Endothelial cell of umbilical vein (primary cell): ENCODE measurements at regions of chr7 and their contacts with region 1.

Region 1: GRCh38 chr7:142782922-142783900 is 12.4 kb downstream of the PRSS2 start:
- DNase-seq: peak; percentile 88
- H3K4me3 ChIP-seq: peak overlapping the region; percentile 32 to 55 (median 49)
- H3K27ac ChIP-seq: no peak overlapping the region
- H3K4me1 ChIP-seq: peaks cover 3% of the 10 kb centered on the region
- H3K27me3 ChIP-seq: no peaks in the 10 kb centered on the region
- CTCF ChIP-seq: peak; percentile 92 to 98
- POLR2A ChIP-seq: no peak

Region 2: GRCh38 chr7:142535123-142535779 is 248.0 kb before region 1 on chr7:
- CTCF ChIA-PET with region 1: interaction called, 167 read pairs
- POLR2A ChIA-PET with region 1: interaction called, 4 read pairs
- dilution Hi-C with region 1: no loop called
- intact Hi-C with region 1: loop called (anchors 1 kb)
- DNase-seq: peak; percentile 86
- H3K4me3 ChIP-seq: no peak overlapping the region
- H3K27ac ChIP-seq: peak overlapping the region; percentile 46
- H3K4me1 ChIP-seq: peaks cover 37% of the 10 kb centered on the region
- H3K27me3 ChIP-seq: no peaks in the 10 kb centered on the region
- CTCF ChIP-seq: peak; percentile 87 to 90
- POLR2A ChIP-seq: peak; percentile 45

Region 3: GRCh38 chr7:142612237-142612881 is 170.9 kb before region 1 on chr7:
- CTCF ChIA-PET with region 1: interaction called, 29 read pairs
- POLR2A ChIA-PET with region 1: no interaction called
- dilution Hi-C with region 1: no loop called
- intact Hi-C with region 1: no loop called
- DNase-seq: peak; percentile 9
- H3K4me3 ChIP-seq: no peak overlapping the region
- H3K27ac ChIP-seq: no peak overlapping the region
- H3K4me1 ChIP-seq: peaks cover 5% of the 10 kb centered on the region
- H3K27me3 ChIP-seq: peaks cover 0 to under 1% of the 10 kb centered on the region in 2 experiments
- CTCF ChIP-seq: no peak
- POLR2A ChIP-seq: no peak

Region 4: GRCh38 chr7:142669074-142669654 is 114.0 kb before region 1 on chr7:
- CTCF ChIA-PET with region 1: interaction called, 103 read pairs
- POLR2A ChIA-PET with region 1: no interaction called
- dilution Hi-C with region 1: no loop called
- intact Hi-C with region 1: loop called (anchors 1 kb)
- DNase-seq: peak; percentile 53
- H3K4me3 ChIP-seq: no peak overlapping the region
- H3K27ac ChIP-seq: no peak overlapping the region
- H3K4me1 ChIP-seq: no peaks in the 10 kb centered on the region
- H3K27me3 ChIP-seq: peaks cover 2 to 4% of the 10 kb centered on the region in 2 experiments
- CTCF ChIP-seq: peak; percentile 8 to 27
- POLR2A ChIP-seq: no peak

Region 5: GRCh38 chr7:142720172-142720773 is 62.9 kb before region 1 on chr7:
- CTCF ChIA-PET with region 1: interaction called, 213 read pairs
- POLR2A ChIA-PET with region 1: no interaction called
- dilution Hi-C with region 1: no loop called
- intact Hi-C with region 1: no loop called
- DNase-seq: no peak
- H3K4me3 ChIP-seq: no peak overlapping the region
- H3K27ac ChIP-seq: no peak overlapping the region
- H3K4me1 ChIP-seq: no peaks in the 10 kb centered on the region
- H3K27me3 ChIP-seq: peaks cover 21 to 23% of the 10 kb centered on the region in 2 experiments
- CTCF ChIP-seq: no peak
- POLR2A ChIP-seq: no peak

Region 6: DNA sequence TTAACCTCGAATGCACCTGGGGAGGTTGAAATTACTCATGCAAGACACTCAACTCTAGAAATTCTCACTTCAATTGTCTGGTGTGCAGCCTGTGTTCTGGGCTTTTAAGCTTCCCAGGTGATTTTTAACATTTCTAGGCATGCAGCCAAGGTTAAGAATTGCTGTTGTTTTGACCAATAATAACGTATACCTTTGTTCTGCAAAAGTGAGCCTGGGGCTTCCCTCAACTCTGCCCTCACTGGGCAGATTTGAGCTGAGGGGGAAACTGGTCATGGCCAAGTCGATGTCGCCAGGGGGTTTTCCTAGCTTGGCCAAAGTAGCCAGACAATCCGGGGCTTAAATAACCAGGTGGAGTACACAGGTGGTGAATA is 11.9 kb before region 1 on chr7:
- CTCF ChIA-PET with region 1: interaction called, 18 read pairs
- POLR2A ChIA-PET with region 1: no interaction called
- dilution Hi-C with region 1: no loop called
- intact Hi-C with region 1: no loop called
- DNase-seq: no peak
- H3K4me3 ChIP-seq: no peak overlapping the region
- H3K27ac ChIP-seq: no peak overlapping the region
- H3K4me1 ChIP-seq: peaks cover 8% of the 10 kb centered on the region
- H3K27me3 ChIP-seq: peaks cover 11 to 31% of the 10 kb centered on the region in 2 experiments
- CTCF ChIP-seq: no peak
- POLR2A ChIP-seq: no peak